ENCODE measurements at regions of chr21 and their contacts with region 1.

Region 1: DNA sequence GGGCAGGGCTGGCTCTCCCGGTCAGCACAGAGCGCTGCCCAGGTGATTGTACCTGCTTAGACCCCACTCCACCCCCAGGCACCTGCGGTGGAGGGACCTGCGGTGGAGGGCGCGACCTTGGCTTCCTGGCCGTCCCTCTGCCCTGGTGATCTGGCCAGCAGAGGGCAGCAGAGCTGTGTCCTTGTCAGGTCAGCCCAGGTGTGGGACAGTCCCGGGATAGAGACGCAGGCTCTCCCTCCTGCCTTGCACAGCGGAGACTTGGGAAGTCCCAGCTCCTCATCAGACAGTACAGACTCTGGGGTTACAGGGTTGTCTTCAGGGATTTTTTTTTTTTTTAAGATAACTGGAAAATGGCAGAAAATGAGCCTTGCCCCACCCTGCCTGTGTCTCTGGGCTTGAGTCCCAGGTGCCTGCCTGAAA is 10.0 kb downstream of the SLX9 start:
- DNase-seq: peak; percentile 83
- H3K4me3 Mint-ChIP-seq: no peak overlapping the region
- H3K27ac Mint-ChIP-seq: no peak overlapping the region
- H3K4me1 Mint-ChIP-seq: peaks cover 11% of the 10 kb centered on the region
- H3K27me3 Mint-ChIP-seq: no peaks in the 10 kb centered on the region
- CTCF ChIP-seq: peak; percentile 90

Region 2: GRCh38 chr21:44920694-44921604 is 28.8 kb before region 1 on chr21 and contains the start of gene ITGB2:
- CTCF ChIA-PET with region 1: no interaction called
- POLR2A ChIA-PET with region 1: no interaction called
- intact Hi-C with region 1: no loop called
- DNase-seq: no peak
- H3K4me3 Mint-ChIP-seq: no peak within 1 kb of the TSS
- H3K27ac Mint-ChIP-seq: no peak within 1 kb of the TSS
- H3K4me1 Mint-ChIP-seq: peaks cover 31% of the 10 kb centered on the region
- H3K27me3 Mint-ChIP-seq: no peaks in the 10 kb centered on the region
- CTCF ChIP-seq: no peak
- total RNA-seq, gene ITGB2: 24.8 and 29.3 TPM in 2 replicates

Region 3: DNA sequence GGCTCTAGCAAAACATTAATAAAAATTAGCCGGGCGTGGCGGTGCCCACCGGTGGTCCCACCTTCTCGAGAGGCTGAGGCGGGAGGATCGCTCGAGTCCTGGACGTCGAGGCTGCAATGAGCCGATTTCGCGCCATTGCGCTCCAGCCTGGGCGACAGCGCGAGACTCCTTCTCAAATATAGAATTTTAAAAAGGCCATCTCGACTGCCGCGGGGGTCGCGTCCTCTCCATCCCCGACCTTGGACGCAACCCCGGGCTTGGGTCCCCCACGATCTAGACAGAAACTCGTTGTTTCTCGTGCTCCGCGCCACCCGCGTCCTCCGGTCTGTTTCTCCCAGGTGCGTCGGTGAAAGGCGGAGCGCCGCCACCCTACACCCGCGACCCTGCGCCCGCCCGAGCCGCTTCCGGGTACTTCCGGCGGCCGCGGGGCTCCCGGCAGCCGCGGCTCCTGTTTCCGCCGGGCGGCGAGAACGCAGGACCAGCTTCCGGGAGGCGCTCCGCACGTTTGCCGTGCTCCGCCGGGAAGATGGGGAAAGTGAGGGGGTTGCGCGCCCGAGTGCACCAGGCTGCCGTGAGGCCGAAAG is 10.2 kb before region 1 on chr21 and contains the start of gene SLX9:
- CTCF ChIA-PET with region 1: interaction called, 20 read pairs
- POLR2A ChIA-PET with region 1: interaction called, 3 read pairs
- intact Hi-C with region 1: no loop called
- DNase-seq: peak; percentile 77
- H3K4me3 Mint-ChIP-seq: peak within 1 kb of the TSS; percentile 85
- H3K27ac Mint-ChIP-seq: peak within 1 kb of the TSS; percentile 61
- H3K4me1 Mint-ChIP-seq: peaks cover 30% of the 10 kb centered on the region
- H3K27me3 Mint-ChIP-seq: no peaks in the 10 kb centered on the region
- CTCF ChIP-seq: no peak
- total RNA-seq, gene SLX9: 40.4 and 58.7 TPM in 2 replicates

Region 4: GRCh38 chr21:44962403-44962966 is 12.7 kb after region 1 on chr21:
- CTCF ChIA-PET with region 1: interaction called, 25 read pairs
- POLR2A ChIA-PET with region 1: interaction called, 4 read pairs
- intact Hi-C with region 1: no loop called
- DNase-seq: peak; percentile 63
- H3K4me3 Mint-ChIP-seq: peak overlapping the region; percentile 19
- H3K27ac Mint-ChIP-seq: peak overlapping the region; percentile 39
- H3K4me1 Mint-ChIP-seq: peaks cover 12% of the 10 kb centered on the region
- H3K27me3 Mint-ChIP-seq: no peaks in the 10 kb centered on the region
- CTCF ChIP-seq: no peak

Region 5: DNA sequence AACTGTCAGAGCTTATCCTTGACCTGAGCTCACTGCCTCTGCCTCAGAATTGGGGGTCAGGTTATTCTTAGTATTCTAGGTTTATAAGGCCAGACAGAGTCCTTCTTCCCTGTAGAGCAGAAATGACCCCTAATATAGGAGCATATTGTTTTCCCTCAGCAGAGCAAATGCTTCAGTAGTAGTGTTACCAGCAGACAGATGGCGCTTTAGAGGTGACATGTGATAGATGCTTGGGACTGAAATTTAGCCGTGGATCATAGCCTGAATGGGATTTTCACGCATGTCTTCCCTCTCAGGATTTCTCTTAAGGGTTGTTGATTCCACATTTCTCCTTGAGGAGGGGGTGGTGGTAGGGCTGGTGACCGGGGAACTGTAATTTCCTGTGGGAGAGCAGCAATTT is 149.1 kb after region 1 on chr21:
- CTCF ChIA-PET with region 1: interaction called, 20 read pairs
- POLR2A ChIA-PET with region 1: interaction called, 3 read pairs
- intact Hi-C with region 1: no loop called
- DNase-seq: peak; percentile 27
- H3K4me3 Mint-ChIP-seq: no peak overlapping the region
- H3K27ac Mint-ChIP-seq: peak overlapping the region; percentile 9
- H3K4me1 Mint-ChIP-seq: peaks cover 19% of the 10 kb centered on the region
- H3K27me3 Mint-ChIP-seq: no peaks in the 10 kb centered on the region
- CTCF ChIP-seq: peak; percentile 20

Region 6: GRCh38 chr21:45108034-45108790 is 158.4 kb after region 1 on chr21:
- CTCF ChIA-PET with region 1: interaction called, 20 read pairs
- POLR2A ChIA-PET with region 1: no interaction called
- intact Hi-C with region 1: no loop called
- DNase-seq: no peak
- H3K4me3 Mint-ChIP-seq: no peak overlapping the region
- H3K27ac Mint-ChIP-seq: no peak overlapping the region
- H3K4me1 Mint-ChIP-seq: peaks cover 12% of the 10 kb centered on the region
- H3K27me3 Mint-ChIP-seq: no peaks in the 10 kb centered on the region
- CTCF ChIP-seq: no peak

Region 7: DNA sequence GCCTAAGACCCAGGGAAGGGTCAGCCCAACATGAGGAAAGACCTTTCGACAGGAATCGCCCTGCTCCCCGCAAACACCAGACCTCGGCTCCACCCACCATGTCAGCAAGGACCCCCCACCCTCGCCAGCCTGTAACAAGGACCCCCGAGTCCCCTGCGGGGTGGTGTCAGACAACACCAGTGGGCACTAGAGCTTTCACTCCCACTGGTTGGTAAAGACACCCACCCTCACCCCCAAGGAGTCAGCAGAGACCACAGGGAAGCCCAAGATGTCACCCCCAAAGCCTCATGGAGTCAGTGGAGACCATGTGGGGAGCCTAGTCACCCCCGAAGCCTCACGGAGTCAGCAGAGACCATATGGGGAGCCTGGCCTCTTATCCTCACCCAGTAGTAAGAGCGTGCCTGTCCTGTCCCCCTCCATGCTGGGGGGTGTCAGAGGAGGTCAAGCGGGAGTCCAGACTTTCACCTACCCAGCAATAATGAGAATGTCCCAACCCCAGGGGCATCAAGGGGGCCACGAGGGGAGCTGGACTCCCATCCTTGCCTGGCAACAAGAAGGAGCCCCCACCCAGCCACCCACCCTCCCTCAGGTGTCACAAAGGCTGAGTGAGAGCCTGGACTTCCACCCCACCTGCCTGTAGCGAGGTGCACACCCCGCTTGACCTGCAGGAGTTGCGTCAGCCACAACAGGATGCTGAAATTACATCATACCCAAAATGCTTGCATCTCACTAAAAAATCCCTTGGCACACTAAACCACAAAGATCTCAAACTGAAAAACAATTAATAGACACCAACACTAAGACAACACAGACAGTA is 567.7 kb after region 1 on chr21:
- CTCF ChIA-PET with region 1: no interaction called
- POLR2A ChIA-PET with region 1: no interaction called
- intact Hi-C with region 1: no loop called
- DNase-seq: peak; percentile 64
- H3K4me3 Mint-ChIP-seq: no peak overlapping the region
- H3K27ac Mint-ChIP-seq: no peak overlapping the region
- H3K4me1 Mint-ChIP-seq: no peaks in the 10 kb centered on the region
- H3K27me3 Mint-ChIP-seq: no peaks in the 10 kb centered on the region
- CTCF ChIP-seq: no peak